Common myeloid progenitor, CD34-positive (primary cell): ENCODE measurements at regions of chr6 and their contacts with region 1.

Region 1: GRCh38 chr6:36478051-36478526 is 35.3 kb downstream of the KCTD20 start:
- DNase-seq: peak; percentile 59 to 81 (median 62)
- H3K4me3 ChIP-seq: peak overlapping the region in 1 of 7 experiments; percentile 8
- H3K27ac ChIP-seq: peak overlapping the region in 1 of 2 experiments; percentile 39
- H3K4me1 ChIP-seq: peaks cover 12 to 31% (median 20%) of the 10 kb centered on the region in 4 experiments
- H3K27me3 ChIP-seq: no peaks in the 10 kb centered on the region

Region 2: GRCh38 chr6:36404163-36404562 is 73.9 kb before region 1 on chr6:
- CTCF ChIA-PET with region 1: no interaction called
- POLR2A ChIA-PET with region 1: no interaction called
- DNase-seq: no peak
- H3K4me3 ChIP-seq: no peak overlapping the region
- H3K27ac ChIP-seq: no peak overlapping the region
- H3K4me1 ChIP-seq: no peaks in the 10 kb centered on the region
- H3K27me3 ChIP-seq: no peaks in the 10 kb centered on the region

Region 3: DNA sequence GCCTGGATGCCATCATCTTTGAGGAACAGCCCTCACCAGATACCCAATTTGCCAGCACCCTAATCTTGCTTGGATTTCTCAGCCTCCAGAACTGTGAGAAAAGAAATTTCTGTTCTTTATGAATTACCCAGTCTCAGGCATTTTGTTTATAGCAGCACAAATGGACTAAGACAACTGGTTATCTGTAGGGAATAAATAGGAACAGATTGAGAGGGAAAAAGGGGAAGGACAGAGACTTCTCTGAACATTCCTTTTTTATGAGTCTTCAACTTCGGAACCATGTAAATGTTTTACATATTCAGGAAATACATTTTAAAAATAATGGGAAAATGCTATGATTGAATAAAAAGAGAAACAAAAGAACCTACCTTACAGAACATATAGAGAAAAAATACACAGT is 14.4 kb before region 1 on chr6:
- CTCF ChIA-PET with region 1: interaction called, 15 read pairs
- POLR2A ChIA-PET with region 1: interaction called, 3 read pairs
- DNase-seq: no peak
- H3K4me3 ChIP-seq: no peak overlapping the region
- H3K27ac ChIP-seq: no peak overlapping the region
- H3K4me1 ChIP-seq: peaks cover 0 to 2% (median under 1%) of the 10 kb centered on the region in 4 experiments
- H3K27me3 ChIP-seq: no peaks in the 10 kb centered on the region

Region 4: DNA sequence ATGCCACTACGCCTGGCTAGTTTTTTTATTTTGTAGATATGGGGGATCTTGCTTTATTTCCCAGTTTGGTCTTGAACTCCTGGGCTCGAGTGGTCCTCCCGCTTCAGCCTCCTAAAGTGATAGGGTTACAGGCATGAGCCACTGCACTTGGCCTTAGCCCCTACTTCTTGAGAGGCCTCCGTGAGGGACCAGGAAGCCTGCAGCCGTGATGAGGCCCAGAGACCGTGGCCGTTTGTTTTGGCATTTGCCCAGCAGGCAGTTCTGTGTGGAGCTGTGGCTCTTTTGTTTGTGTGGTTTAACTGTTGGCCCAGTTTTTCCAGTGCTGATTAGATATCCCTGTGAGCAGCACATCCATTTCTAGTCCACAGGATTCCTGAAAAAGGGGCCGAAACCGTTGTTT is 155.8 kb after region 1 on chr6:
- CTCF ChIA-PET with region 1: no interaction called
- POLR2A ChIA-PET with region 1: no interaction called
- DNase-seq: peak in 1 of 3 donors; percentile 19
- H3K4me3 ChIP-seq: no peak overlapping the region
- H3K27ac ChIP-seq: no peak overlapping the region
- H3K4me1 ChIP-seq: peaks cover 0 to 24% (median 13%) of the 10 kb centered on the region in 4 experiments
- H3K27me3 ChIP-seq: no peaks in the 10 kb centered on the region